HepG2 (cell line): ENCODE measurements at regions of chr1 and their contacts with region 1.

Region 1: DNA sequence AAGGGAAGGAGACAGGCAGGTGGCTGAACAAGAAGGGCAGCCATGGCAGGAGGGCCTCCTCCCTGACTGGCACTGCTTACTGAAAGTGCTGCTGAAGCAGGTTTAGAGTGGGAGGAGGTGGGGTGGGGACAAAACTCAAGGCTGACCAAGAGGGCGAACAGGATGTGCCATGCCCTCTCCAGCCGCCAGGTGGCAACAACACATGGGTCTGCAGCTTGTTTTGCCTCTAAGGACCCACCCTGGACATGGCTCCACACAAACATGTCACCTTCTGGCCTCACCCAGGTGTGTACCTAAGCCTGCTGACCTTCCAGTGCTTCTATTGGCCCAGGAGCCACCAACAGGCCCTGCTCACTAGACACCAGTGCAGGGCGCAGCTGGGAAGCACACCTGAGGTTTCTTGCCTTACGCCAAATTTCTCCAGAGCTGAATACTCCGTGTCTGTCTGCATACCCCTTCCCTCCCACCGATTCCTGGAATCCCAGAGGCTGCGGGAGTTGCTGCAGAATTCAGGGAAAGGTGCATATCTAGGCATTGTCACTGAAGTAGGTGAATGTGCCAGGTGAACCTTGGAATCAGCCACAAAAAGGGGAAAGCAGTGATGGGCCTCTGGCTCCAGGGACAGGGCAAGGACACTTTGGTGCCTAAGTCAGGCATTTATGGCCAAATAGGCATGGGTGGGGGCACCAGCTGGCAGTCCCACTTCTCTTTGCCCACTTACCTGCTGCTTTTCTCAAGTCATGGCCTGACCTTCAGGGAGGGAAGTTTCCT is 5.3 kb downstream of the PSRC1 start:
- DNase-seq: peak; percentile 86
- ATAC-seq: peak; percentile 70
- H3K4me3 ChIP-seq: peak overlapping the region in 1 of 3 experiments; percentile 19; a peak in 1 of 6 replicates
- H3K27ac ChIP-seq: peak overlapping the region; percentile 66
- H3K4me1 ChIP-seq: peaks cover 88% of the 10 kb centered on the region
- H3K27me3 ChIP-seq: no peaks in the 10 kb centered on the region; a peak in 1 of 5 replicates
- CTCF ChIP-seq: peak; percentile 99
- EP300 ChIP-seq: peak in 1 of 2 experiments; percentile 30; a peak in 1 of 4 replicates
- POLR2A ChIP-seq: peak; percentile 20 to 66; a peak in 3 of 4 replicates
- RAD21 ChIP-seq: peak; percentile 93

Region 2: GRCh38 chr1:109298666-109299557 is 21.3 kb after region 1 on chr1:
- CTCF ChIA-PET with region 1: no interaction called
- POLR2A ChIA-PET with region 1: interaction called, 28 read pairs
- in situ Hi-C with region 1: no loop called
- intact Hi-C with region 1: no loop called
- DNase-seq: peak; percentile 98
- ATAC-seq: peak; percentile 85
- H3K4me3 ChIP-seq: peak overlapping the region in 2 of 3 experiments; percentile 6 to 65; a peak in 1 of 6 replicates
- H3K27ac ChIP-seq: peak overlapping the region; percentile 96
- H3K4me1 ChIP-seq: peaks cover 51% of the 10 kb centered on the region
- H3K27me3 ChIP-seq: no peaks in the 10 kb centered on the region
- CTCF ChIP-seq: no peak
- EP300 ChIP-seq: peak; percentile 90 to 94
- POLR2A ChIP-seq: peak in 1 of 2 experiments; percentile 48; a peak in 1 of 4 replicates
- RAD21 ChIP-seq: no peak; the same call in 1 of the 2 replicates

Region 3: GRCh38 chr1:109307274-109308021 is 29.8 kb after region 1 on chr1:
- CTCF ChIA-PET with region 1: no interaction called
- POLR2A ChIA-PET with region 1: interaction called, 21 read pairs
- in situ Hi-C with region 1: no loop called
- intact Hi-C with region 1: no loop called
- DNase-seq: peak; percentile 34
- ATAC-seq: peak; percentile 28
- H3K4me3 ChIP-seq: peak overlapping the region in 2 of 3 experiments; percentile 36 to 62; a peak in 3 of 6 replicates
- H3K27ac ChIP-seq: peak overlapping the region; percentile 24
- H3K4me1 ChIP-seq: peaks cover 87% of the 10 kb centered on the region
- H3K27me3 ChIP-seq: no peaks in the 10 kb centered on the region
- CTCF ChIP-seq: no peak
- EP300 ChIP-seq: no peak
- POLR2A ChIP-seq: no peak
- RAD21 ChIP-seq: no peak

Region 4: GRCh38 chr1:109322974-109323373 is 45.4 kb after region 1 on chr1:
- CTCF ChIA-PET with region 1: no interaction called
- POLR2A ChIA-PET with region 1: no interaction called
- in situ Hi-C with region 1: loop called (anchors 5 kb)
- intact Hi-C with region 1: no loop called
- DNase-seq: no peak
- ATAC-seq: no peak
- H3K4me3 ChIP-seq: no peak overlapping the region
- H3K27ac ChIP-seq: no peak overlapping the region
- H3K4me1 ChIP-seq: no peaks in the 10 kb centered on the region
- H3K27me3 ChIP-seq: no peaks in the 10 kb centered on the region
- CTCF ChIP-seq: no peak
- EP300 ChIP-seq: no peak
- POLR2A ChIP-seq: no peak
- RAD21 ChIP-seq: no peak

Region 5: GRCh38 chr1:109341944-109342930 is 64.6 kb after region 1 on chr1:
- CTCF ChIA-PET with region 1: no interaction called
- POLR2A ChIA-PET with region 1: interaction called, 3 read pairs
- in situ Hi-C with region 1: no loop called
- intact Hi-C with region 1: loop called (anchors 10 kb)
- DNase-seq: no peak
- ATAC-seq: no peak
- H3K4me3 ChIP-seq: no peak overlapping the region
- H3K27ac ChIP-seq: no peak overlapping the region
- H3K4me1 ChIP-seq: peaks cover 23% of the 10 kb centered on the region
- H3K27me3 ChIP-seq: no peaks in the 10 kb centered on the region
- CTCF ChIP-seq: no peak
- EP300 ChIP-seq: no peak
- POLR2A ChIP-seq: no peak
- RAD21 ChIP-seq: no peak